SK-N-SH (cell line): ENCODE measurements at regions of chr10 and their contacts with region 1.

Region 1: GRCh38 chr10:91551856-91552255 is 81.0 kb downstream of the PPP1R3C start:
- DNase-seq: peak; percentile 55
- H3K4me3 ChIP-seq: no peak overlapping the region
- H3K27ac ChIP-seq: no peak overlapping the region
- H3K4me1 ChIP-seq: peaks cover 0 to 5% of the 10 kb centered on the region in 2 experiments; a peak in 2 of 4 replicates
- H3K27me3 ChIP-seq: no peaks in the 10 kb centered on the region
- CTCF ChIP-seq: peak; percentile 68
- EP300 ChIP-seq: no peak
- RAD21 ChIP-seq: peak; percentile 77

Region 2: DNA sequence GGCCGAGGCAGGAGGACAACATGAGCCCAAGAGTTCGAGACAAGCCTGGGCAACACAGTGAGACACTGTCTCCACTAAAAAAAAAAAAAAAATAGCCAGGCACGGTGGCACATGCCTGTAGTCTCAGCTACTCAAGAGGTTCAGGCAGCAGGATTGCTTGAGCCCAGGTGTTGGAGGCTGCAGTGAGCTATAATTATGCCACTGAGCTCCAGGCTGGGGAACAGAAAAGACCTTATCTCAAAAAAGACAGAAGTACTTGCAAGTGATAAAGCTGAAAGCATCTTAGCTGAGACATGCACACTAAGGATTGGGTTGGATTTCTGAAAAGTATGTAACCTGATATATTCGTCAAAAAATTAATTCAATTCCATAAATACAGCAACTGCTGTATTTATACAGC is 12.7 kb after region 1 on chr10:
- CTCF ChIA-PET with region 1: interaction called, 18 read pairs
- POLR2A ChIA-PET with region 1: interaction called, 3 read pairs
- DNase-seq: no peak
- H3K4me3 ChIP-seq: no peak overlapping the region
- H3K27ac ChIP-seq: no peak overlapping the region
- H3K4me1 ChIP-seq: no peaks in the 10 kb centered on the region
- H3K27me3 ChIP-seq: no peaks in the 10 kb centered on the region
- CTCF ChIP-seq: no peak
- EP300 ChIP-seq: no peak
- RAD21 ChIP-seq: no peak